Gastrocnemius medialis (tissue), 4 donors: ENCODE measurements at regions of chr7 and their contacts with region 1.

Region 1: GRCh38 chr7:86926732-86927131 is 132.7 kb downstream of the ELAPOR2 start:
- DNase-seq: no peak
- ATAC-seq: no peak
- H3K4me3 ChIP-seq: no peak overlapping the region
- H3K27ac ChIP-seq: no peak overlapping the region
- H3K4me1 ChIP-seq: peaks cover 0 to 3% of the 10 kb centered on the region in 2 donors
- H3K27me3 ChIP-seq: no peaks in the 10 kb centered on the region
- CTCF ChIP-seq: peak in 4 of 5 experiments; percentile 38 to 67 (median 50)
- POLR2A ChIP-seq: no peak

Region 2: DNA sequence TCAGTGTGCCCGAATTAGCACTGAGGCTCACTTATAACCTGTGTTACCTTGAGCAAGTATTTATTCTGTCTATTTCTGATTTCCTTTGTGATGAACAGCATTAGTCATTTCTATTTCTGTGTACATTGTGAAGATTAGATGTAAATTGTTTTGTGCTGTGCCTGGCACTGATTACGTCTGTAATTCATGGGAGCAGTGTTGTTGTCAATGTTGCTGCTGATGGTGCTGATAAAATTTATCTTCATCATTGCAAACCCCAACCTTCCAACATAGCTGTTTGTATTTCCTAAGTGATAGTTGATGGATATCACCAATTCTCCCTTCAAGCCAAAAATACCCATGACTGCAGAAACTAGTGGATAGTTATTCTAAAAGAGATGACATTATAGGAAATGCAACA is 683.6 kb before region 1 on chr7:
- in situ Hi-C with region 1: no loop called
- intact Hi-C with region 1: no loop called
- DNase-seq: no peak
- ATAC-seq: no peak
- H3K4me3 ChIP-seq: no peak overlapping the region
- H3K27ac ChIP-seq: no peak overlapping the region
- H3K4me1 ChIP-seq: no peaks in the 10 kb centered on the region
- H3K27me3 ChIP-seq: no peaks in the 10 kb centered on the region
- CTCF ChIP-seq: no peak
- POLR2A ChIP-seq: no peak

Region 3: GRCh38 chr7:86846494-86847190 is 80.1 kb before region 1 on chr7:
- in situ Hi-C with region 1: no loop called
- intact Hi-C with region 1: no loop called
- DNase-seq: no peak
- ATAC-seq: no peak
- H3K4me3 ChIP-seq: no peak overlapping the region
- H3K27ac ChIP-seq: no peak overlapping the region
- H3K4me1 ChIP-seq: no peaks in the 10 kb centered on the region
- H3K27me3 ChIP-seq: no peaks in the 10 kb centered on the region
- CTCF ChIP-seq: no peak
- POLR2A ChIP-seq: no peak

Region 4: DNA sequence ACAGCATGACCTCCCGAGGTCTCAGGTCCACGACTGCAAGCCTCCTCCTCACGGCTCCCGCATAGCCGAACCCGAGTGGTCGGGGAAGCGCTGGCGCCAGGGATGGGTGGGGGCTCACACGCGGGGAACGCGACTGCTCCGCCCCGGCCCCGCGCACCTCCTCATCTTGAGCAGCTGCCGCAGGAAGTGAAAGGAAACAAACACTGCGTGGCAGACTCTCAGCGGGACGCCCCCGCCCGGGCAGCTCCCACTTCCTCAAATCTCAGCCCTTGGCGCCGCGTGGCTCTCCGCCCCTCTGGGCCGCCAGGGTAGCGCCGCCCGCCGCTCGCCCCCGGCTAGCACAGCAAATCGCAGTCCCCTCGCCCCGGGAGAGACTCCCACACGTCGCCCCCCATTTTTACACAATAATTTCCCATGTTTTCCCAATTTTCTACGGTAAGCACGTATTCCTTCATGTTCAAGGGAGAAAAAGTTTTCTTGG is 292.9 kb after region 1 on chr7 and contains the start of gene TMEM243:
- in situ Hi-C with region 1: loop called in 1 of 4 experiments (anchors 10 kb)
- intact Hi-C with region 1: no loop called
- DNase-seq: peak; percentile 43 to 48
- ATAC-seq: peak; percentile 57 to 62
- H3K4me3 ChIP-seq: peak within 1 kb of the TSS; percentile 80 to 89 (median 81)
- H3K27ac ChIP-seq: peak within 1 kb of the TSS; percentile 67 to 78 (median 72)
- H3K4me1 ChIP-seq: peaks cover 10% of the 10 kb centered on the region in 2 donors
- H3K27me3 ChIP-seq: no peaks in the 10 kb centered on the region
- CTCF ChIP-seq: peak in 1 of 5 experiments; percentile 30
- POLR2A ChIP-seq: peak; percentile 21 to 48
- total RNA-seq, gene TMEM243: 2.8 to 6.5 (median 4.1) TPM

Region 5: GRCh38 chr7:87231256-87231655 is 304.5 kb after region 1 on chr7:
- in situ Hi-C with region 1: loop called in 3 of 4 experiments (anchors 10 to 25 kb)
- intact Hi-C with region 1: loop called (anchors 2 kb)
- DNase-seq: no peak
- ATAC-seq: no peak
- H3K4me3 ChIP-seq: no peak overlapping the region
- H3K27ac ChIP-seq: no peak overlapping the region
- H3K4me1 ChIP-seq: peaks cover 4 to 7% of the 10 kb centered on the region in 2 donors
- H3K27me3 ChIP-seq: no peaks in the 10 kb centered on the region
- CTCF ChIP-seq: no peak
- POLR2A ChIP-seq: no peak